Activated B cell treated with CpG ODN at 0.5 μM for 24 hours (primary cell): ENCODE measurements at regions of chr12 and their contacts with region 1.

Region 1: GRCh38 chr12:40168868-40169267 is 55.9 kb upstream of the LRRK2 start:
- DNase-seq: no peak
- ATAC-seq: peak; percentile 77
- H3K4me3 Mint-ChIP-seq: peak overlapping the region; percentile 70
- H3K27ac Mint-ChIP-seq: peak overlapping the region; percentile 82
- H3K4me1 Mint-ChIP-seq: peaks cover 34% of the 10 kb centered on the region
- H3K27me3 Mint-ChIP-seq: no peaks in the 10 kb centered on the region
- CTCF ChIP-seq: no peak

Region 2: GRCh38 chr12:40107098-40107802 is 61.6 kb before region 1 on chr12:
- CTCF ChIA-PET with region 1: no interaction called
- POLR2A ChIA-PET with region 1: no interaction called
- intact Hi-C with region 1: no loop called
- DNase-seq: peak; percentile 76
- ATAC-seq: peak; percentile 45
- H3K4me3 Mint-ChIP-seq: peak overlapping the region; percentile 87
- H3K27ac Mint-ChIP-seq: peak overlapping the region; percentile 73
- H3K4me1 Mint-ChIP-seq: peaks cover 45% of the 10 kb centered on the region
- H3K27me3 Mint-ChIP-seq: no peaks in the 10 kb centered on the region
- CTCF ChIP-seq: no peak

Region 3: GRCh38 chr12:40152783-40153383 is 16.0 kb before region 1 on chr12:
- CTCF ChIA-PET with region 1: interaction called, 4 read pairs
- POLR2A ChIA-PET with region 1: interaction called, 9 read pairs
- intact Hi-C with region 1: loop called (anchors 1 kb)
- DNase-seq: peak; percentile 33
- ATAC-seq: peak; percentile 56
- H3K4me3 Mint-ChIP-seq: no peak overlapping the region
- H3K27ac Mint-ChIP-seq: peak overlapping the region; percentile 3
- H3K4me1 Mint-ChIP-seq: peaks cover 52% of the 10 kb centered on the region
- H3K27me3 Mint-ChIP-seq: no peaks in the 10 kb centered on the region
- CTCF ChIP-seq: peak; percentile 58

Region 4: DNA sequence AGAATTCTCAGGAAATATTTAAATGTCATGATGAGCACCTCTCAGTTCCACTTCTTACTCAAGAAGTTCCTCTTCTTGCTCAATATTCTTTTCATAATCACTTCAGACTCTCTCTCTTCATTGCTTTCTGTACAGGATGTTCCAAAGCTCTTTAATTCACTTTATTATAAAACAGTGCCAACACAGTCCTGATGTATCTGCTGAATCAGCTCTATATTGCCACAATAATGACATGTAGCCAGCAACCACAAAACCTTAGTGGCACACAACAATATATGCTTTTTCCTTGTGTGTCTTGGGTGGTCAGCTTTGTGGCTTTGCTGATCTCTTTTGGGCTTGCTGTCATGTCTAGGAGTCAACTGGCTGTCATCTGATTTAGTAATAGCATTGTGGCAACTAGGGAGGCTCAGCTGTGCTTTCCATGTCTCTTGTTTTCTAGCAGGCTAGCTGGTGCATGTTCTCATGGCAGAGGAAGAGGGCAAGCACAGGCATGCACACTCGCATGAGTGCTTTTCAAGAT is 10.2 kb before region 1 on chr12:
- CTCF ChIA-PET with region 1: interaction called, 4 read pairs
- POLR2A ChIA-PET with region 1: interaction called, 9 read pairs
- intact Hi-C with region 1: loop called (anchors 1 kb)
- DNase-seq: no peak
- ATAC-seq: peak; percentile 76
- H3K4me3 Mint-ChIP-seq: peak overlapping the region; percentile 69
- H3K27ac Mint-ChIP-seq: peak overlapping the region; percentile 87
- H3K4me1 Mint-ChIP-seq: peaks cover 56% of the 10 kb centered on the region
- H3K27me3 Mint-ChIP-seq: no peaks in the 10 kb centered on the region
- CTCF ChIP-seq: no peak

Region 5: DNA sequence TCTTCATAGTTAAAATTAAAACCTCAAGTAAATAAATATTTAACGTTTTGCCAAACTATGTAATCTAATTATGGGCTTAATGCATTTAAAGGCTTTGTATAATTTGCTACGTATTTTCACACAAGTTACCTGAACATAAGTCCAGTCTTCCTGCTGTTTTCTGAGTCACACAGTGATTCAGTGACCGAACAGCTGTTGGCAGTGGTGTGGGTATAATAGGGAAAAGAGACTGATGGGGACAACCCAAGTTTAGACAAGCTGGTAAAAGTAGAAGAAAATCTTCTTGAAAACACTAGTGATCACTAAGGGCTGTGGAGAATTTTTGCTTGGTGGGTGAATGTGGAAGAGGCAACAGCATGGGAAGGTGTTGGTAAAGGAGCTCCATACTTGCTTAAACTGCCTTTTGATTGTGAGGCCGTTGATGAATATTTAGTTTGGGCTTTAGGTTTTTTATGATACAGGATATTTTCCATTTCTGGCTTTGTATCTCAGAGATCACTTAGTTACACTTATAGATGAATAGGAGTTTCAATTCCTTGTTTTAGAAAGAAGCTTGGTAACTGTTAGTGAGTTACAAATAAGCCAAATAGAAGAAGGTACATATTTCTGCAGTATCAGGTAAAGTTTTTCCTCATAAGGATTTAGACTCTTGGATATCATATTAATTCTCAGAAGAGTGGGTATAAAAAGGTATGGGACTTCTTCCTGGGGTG is 79.9 kb after region 1 on chr12:
- CTCF ChIA-PET with region 1: no interaction called
- POLR2A ChIA-PET with region 1: no interaction called
- intact Hi-C with region 1: no loop called
- DNase-seq: no peak
- ATAC-seq: peak; percentile 72
- H3K4me3 Mint-ChIP-seq: peak overlapping the region; percentile 72
- H3K27ac Mint-ChIP-seq: peak overlapping the region; percentile 80
- H3K4me1 Mint-ChIP-seq: peaks cover 23% of the 10 kb centered on the region
- H3K27me3 Mint-ChIP-seq: no peaks in the 10 kb centered on the region
- CTCF ChIP-seq: no peak